T-cell (primary cell): ENCODE measurements at regions of chr4 and their contacts with region 1.

Region 1: DNA sequence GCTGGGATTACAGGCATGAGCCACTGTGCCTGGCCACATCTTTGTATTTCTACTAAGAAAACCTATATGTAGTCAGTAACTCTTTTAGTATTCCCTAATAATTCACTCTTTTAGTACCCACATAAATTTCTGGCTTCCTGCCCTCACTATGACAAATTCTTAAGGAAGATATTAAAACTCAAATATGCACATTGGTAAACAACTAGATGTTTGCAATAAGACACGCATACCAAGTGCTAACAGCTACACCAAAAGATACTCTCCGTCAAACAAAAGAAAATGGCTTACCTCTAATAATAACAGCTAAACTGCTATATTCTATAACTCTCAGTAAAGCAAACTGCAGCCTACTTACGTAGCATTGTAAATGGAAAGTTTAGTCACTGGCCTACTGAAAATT is 6.3 kb downstream of the UBA6 start:
- DNase-seq: no peak
- ATAC-seq: no peak
- H3K4me3 ChIP-seq: no peak overlapping the region
- H3K4me3 Mint-ChIP-seq: no peak overlapping the region
- H3K27ac ChIP-seq: no peak overlapping the region
- H3K27ac Mint-ChIP-seq: no peak overlapping the region
- H3K4me1 ChIP-seq: peaks cover 3 to 12% of the 10 kb centered on the region in 2 experiments
- H3K4me1 Mint-ChIP-seq: peaks cover 42 to 53% (median 48%) of the 10 kb centered on the region in 3 donors
- H3K27me3 ChIP-seq: no peaks in the 10 kb centered on the region
- H3K27me3 Mint-ChIP-seq: no peaks in the 10 kb centered on the region

Region 2: GRCh38 chr4:67603310-67604028 is 91.2 kb before region 1 on chr4:
- CTCF ChIA-PET with region 1: no interaction called
- POLR2A ChIA-PET with region 1: no interaction called
- DNase-seq: no peak
- ATAC-seq: no peak
- H3K4me3 ChIP-seq: no peak overlapping the region
- H3K4me3 Mint-ChIP-seq: no peak overlapping the region
- H3K27ac ChIP-seq: no peak overlapping the region
- H3K27ac Mint-ChIP-seq: no peak overlapping the region
- H3K4me1 ChIP-seq: no peaks in the 10 kb centered on the region
- H3K4me1 Mint-ChIP-seq: peaks cover 3 to 7% (median 5%) of the 10 kb centered on the region in 3 donors
- H3K27me3 ChIP-seq: peaks cover 0 to 10% of the 10 kb centered on the region in 2 experiments
- H3K27me3 Mint-ChIP-seq: no peaks in the 10 kb centered on the region

Region 3: DNA sequence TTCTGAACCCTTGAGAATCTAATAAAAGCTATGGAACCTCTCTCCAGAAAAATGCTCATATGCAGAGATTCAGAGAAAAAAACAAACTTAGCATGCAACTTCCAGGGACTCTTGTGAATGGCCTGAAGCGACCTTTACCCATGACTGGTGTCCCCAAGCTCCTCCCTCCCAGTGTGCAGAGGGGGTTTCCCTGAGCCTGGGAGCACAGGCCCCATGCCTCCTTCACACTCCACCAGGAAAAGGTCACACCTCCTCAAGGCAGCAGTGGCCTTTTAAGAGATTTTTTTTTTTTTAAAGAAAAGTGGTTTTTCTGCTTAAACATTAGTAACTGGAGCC is 19.6 kb after region 1 on chr4:
- CTCF ChIA-PET with region 1: no interaction called
- POLR2A ChIA-PET with region 1: interaction called in 1 of 2 experiments, 10 read pairs
- DNase-seq: no peak
- ATAC-seq: no peak
- H3K4me3 ChIP-seq: no peak overlapping the region
- H3K4me3 Mint-ChIP-seq: no peak overlapping the region
- H3K27ac ChIP-seq: no peak overlapping the region
- H3K27ac Mint-ChIP-seq: no peak overlapping the region
- H3K4me1 ChIP-seq: no peaks in the 10 kb centered on the region
- H3K4me1 Mint-ChIP-seq: peaks cover 17 to 18% (median 17%) of the 10 kb centered on the region in 3 donors
- H3K27me3 ChIP-seq: no peaks in the 10 kb centered on the region
- H3K27me3 Mint-ChIP-seq: no peaks in the 10 kb centered on the region